Breast epithelium (tissue), 4 donors: ENCODE measurements at regions of chr16 and their contacts with region 1.

Region 1: DNA sequence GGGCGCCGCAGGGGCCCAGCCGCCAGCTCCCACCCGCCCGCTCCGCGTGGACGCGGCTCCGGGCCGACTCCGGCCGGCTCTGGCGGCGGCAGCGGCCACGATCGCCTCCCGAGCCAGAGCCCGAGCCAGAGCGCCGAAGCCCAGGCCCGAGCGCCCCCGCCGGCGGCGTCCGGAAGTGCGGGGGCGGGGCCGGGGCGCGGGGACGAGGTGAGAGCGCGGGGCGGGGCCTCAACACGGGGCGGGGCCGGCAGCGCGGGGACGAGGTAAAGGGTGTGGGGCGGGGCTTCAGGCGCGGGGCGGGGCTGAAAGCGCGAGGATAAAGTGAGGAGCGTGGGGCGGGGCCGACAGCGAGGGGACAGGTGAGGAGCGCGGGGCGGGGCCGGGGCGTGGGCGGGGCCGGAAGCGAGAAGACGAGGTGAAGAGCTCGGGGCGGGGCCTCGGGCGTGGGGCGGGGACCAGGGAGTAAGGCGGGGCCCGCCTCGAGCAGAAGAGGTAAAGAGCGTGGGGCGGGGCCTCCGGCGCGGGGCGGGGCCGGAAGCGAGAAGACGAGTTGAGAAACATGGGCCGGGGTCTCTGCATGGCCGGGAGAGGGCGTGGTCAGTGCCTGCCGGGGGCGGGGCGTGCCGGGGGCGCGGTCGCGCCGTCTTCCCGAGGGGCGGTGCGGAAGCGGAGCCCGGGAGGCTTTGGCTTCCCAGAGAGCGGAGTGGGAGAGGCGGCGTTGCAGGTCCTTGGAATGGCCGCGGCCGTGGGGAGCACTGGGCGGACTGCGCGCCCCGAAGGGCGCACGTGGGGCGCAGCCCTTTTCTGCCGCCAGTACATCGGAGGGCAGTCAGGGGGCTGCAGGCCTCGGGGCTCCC is at the start of gene AXIN1:
- DNase-seq: peak; percentile 100
- H3K4me3 ChIP-seq: peak within 1 kb of the TSS; percentile 70 to 96 (median 77)
- H3K27ac ChIP-seq: peak within 1 kb of the TSS; percentile 42 to 79
- H3K4me1 ChIP-seq: peaks cover 0 to 5% of the 10 kb centered on the region in 2 donors
- H3K27me3 ChIP-seq: no peaks in the 10 kb centered on the region
- CTCF ChIP-seq: peak in 1 of 3 donors; percentile 40
- POLR2A ChIP-seq: no peak
- total RNA-seq, gene AXIN1: 16.5 to 22.6 (median 22.4) TPM

Region 2: DNA sequence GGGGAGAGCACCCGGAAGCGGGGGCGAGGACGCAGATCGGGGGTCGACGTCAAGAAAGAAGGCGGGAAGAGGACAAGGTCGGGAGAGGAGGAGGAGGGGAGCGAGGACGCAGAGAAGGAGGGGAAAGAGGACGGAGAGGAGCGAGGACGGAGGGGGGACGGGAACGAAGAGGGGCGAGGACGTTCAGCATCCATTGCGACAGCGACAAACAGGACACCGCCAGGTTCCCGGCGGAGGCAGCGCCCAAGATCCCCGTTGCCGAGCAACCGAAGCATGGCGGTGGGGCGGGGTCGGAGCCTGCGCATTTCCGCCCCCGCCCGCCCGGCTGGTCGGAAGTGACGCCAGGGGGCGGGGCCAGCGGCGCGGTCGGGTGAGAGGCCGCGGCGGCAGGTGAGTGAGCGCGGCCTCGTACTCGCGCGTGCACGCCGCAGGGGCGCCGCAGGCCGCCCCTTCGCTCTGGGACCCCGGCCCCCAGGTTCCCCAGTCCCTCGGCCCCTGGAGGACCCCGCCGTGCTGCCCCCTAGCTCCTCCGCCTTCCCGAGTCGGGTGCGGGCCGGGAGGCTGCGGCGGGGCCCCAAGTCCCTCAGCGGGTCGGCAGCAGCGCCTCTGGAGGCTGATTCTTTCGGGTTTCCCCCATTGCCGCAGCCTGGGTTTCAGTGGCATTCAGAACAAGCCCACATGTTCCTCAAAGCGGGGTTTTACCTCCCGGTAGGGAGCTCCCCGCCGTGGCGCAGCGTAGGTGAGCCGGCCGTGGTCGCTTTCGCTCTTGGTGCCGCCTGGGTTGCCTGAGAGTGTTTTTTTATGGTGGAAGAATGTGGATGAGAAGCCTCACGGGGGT is 118.1 kb before region 1 on chr16 and contains the start of gene FAM234A:
- intact Hi-C with region 1: loop called (anchors 10 kb)
- DNase-seq: peak; percentile 92 to 94
- H3K4me3 ChIP-seq: peak within 1 kb of the TSS; percentile 66 to 85 (median 85)
- H3K27ac ChIP-seq: peak within 1 kb of the TSS; percentile 87 to 97
- H3K4me1 ChIP-seq: no peaks in the 10 kb centered on the region
- H3K27me3 ChIP-seq: no peaks in the 10 kb centered on the region
- CTCF ChIP-seq: peak in 2 of 3 donors; percentile 11 to 26
- POLR2A ChIP-seq: no peak
- total RNA-seq, gene FAM234A: 40.6 to 69.3 (median 44.1) TPM

Region 3: DNA sequence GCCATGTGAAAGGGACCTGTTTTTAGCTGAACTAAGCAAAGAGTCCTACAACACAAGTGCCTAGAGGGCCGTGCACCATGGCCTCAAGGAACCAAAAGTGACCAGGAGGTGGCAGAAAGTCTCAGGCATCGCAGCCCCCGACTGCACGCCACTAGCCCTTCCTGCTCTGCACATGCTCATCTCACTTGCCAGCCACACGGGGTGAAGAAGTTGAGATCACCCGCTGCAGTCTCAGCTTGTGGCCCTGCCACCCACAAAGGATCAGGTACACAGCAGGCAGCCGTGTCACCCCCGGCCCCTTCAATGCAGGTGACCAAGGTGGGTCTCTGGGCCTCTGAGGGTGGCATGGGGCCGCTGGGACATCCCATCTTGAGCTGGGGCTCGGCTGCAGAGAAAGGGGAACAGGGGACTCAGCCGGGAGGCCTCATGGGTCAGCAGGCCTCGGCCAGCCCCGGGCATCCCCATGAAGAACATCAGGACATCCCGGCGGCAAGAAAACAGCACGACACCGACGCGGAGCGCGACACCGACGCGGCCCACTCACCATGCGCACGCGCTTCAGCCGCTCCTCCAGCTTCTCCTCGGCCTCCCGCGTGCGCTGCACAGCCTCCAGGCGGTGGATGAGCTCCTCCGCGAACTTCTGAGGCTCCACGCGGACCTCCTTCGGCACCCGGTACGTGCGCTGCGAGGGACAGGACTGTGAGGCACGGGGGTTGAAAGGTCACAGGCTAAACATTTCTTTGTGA is 48.8 kb before region 1 on chr16:
- intact Hi-C with region 1: no loop called
- DNase-seq: no peak
- H3K4me3 ChIP-seq: no peak overlapping the region
- H3K27ac ChIP-seq: no peak overlapping the region
- H3K4me1 ChIP-seq: no peaks in the 10 kb centered on the region
- H3K27me3 ChIP-seq: no peaks in the 10 kb centered on the region
- CTCF ChIP-seq: no peak
- POLR2A ChIP-seq: no peak

Region 4: GRCh38 chr16:425082-425718 is 72.4 kb after region 1 on chr16 and contains the start of gene RAB11FIP3:
- intact Hi-C with region 1: loop called (anchors 2 kb)
- DNase-seq: peak in 1 of 2 donors; percentile 74
- H3K4me3 ChIP-seq: peak within 1 kb of the TSS; percentile 64 to 87 (median 71)
- H3K27ac ChIP-seq: peak within 1 kb of the TSS; percentile 96 to 97
- H3K4me1 ChIP-seq: peaks cover 0 to 8% of the 10 kb centered on the region in 2 donors
- H3K27me3 ChIP-seq: no peaks in the 10 kb centered on the region
- CTCF ChIP-seq: peak in 1 of 3 donors; percentile 27
- POLR2A ChIP-seq: peak; percentile 68
- total RNA-seq, gene RAB11FIP3: 22.0 to 44.6 (median 24.5) TPM